Vagina (tissue), 2 donors: ENCODE measurements at regions of chr9 and their contacts with region 1.

Region 1: GRCh38 chr9:125143375-125144090 is at the start of gene SCAI:
- DNase-seq: peak; percentile 96 to 99
- H3K4me3 ChIP-seq: peak within 1 kb of the TSS; percentile 72 to 87
- H3K27ac ChIP-seq: peak within 1 kb of the TSS; percentile 74
- H3K4me1 ChIP-seq: peaks cover 14% of the 10 kb centered on the region
- H3K27me3 ChIP-seq: no peaks in the 10 kb centered on the region
- CTCF ChIP-seq: peak; percentile 97 to 98 (median 98)
- POLR2A ChIP-seq: no peak
- total RNA-seq, gene SCAI: 15.7 TPM

Region 2: DNA sequence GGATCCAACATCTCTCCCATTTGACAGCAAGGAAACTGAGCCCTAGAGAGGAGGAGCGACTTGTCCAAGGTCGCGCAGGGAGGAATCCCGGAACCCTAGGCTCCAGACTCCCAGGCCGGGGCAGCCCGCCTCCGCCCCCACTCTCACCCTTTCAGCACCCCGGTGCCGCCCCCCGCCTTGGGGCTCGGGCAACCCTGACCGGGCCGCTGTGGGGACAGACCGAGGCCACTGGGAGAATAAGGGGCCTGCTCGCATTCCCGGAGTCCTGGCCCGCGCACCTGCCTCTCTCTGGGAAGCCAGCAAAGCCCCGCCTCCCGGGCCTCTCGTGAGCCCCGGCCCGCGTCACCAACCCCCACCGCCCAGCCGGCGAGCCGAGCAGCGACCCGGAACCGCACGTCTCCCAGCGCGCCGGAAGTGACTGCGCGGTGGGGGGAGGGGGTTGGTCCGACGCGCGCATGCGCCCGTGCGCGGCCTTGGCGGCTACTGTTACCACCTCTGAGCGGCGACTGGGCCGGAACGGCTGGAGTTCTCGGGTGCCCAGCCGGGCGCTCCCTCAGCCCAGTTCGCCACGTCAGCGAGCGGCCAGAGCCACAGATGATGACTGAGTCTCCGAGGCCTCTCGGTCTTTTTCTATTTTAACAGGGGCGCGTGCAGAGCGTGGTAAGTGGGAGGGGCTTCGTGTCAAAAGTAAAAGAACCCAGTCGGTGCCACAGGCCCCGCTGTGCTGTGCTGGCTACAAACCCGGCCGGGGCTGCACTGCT is 202.7 kb before region 1 on chr9 and contains the start of gene GOLGA1:
- intact Hi-C with region 1: loop called (anchors 10 kb)
- DNase-seq: peak in 1 of 2 donors; percentile 93
- H3K4me3 ChIP-seq: peak within 1 kb of the TSS; percentile 56 to 86
- H3K27ac ChIP-seq: peak within 1 kb of the TSS; percentile 90
- H3K4me1 ChIP-seq: peaks cover 17% of the 10 kb centered on the region
- H3K27me3 ChIP-seq: no peaks in the 10 kb centered on the region
- CTCF ChIP-seq: no peak
- POLR2A ChIP-seq: peak in 1 of 2 donors; percentile 81
- total RNA-seq, gene GOLGA1: 14.7 TPM